Left cardiac atrium (tissue), 4 donors: ENCODE measurements at regions of chr15 and their contacts with region 1.

Region 1: DNA sequence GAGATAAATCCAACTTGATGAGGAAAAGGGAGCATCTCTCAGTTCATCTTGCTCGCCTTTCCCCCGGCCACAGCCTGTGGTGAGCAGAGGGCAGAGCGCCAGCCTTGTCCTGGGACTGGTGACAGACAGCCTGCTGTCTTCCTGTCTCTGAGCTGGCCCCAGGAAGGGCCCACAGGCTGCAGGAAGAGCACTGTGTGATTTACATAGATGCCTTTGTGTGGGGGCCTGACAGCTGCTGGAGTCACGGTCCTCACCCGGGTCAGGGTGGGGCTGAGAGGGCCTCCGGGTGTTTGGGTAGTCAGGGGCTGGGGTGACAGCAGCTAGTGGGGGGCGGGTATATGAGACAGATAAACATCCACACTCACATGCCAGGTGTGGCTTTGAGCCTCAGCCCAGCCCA is 29.3 kb downstream of the PLA2G4D start:
- DNase-seq: no peak
- ATAC-seq: peak; percentile 16 to 21

Region 2: DNA sequence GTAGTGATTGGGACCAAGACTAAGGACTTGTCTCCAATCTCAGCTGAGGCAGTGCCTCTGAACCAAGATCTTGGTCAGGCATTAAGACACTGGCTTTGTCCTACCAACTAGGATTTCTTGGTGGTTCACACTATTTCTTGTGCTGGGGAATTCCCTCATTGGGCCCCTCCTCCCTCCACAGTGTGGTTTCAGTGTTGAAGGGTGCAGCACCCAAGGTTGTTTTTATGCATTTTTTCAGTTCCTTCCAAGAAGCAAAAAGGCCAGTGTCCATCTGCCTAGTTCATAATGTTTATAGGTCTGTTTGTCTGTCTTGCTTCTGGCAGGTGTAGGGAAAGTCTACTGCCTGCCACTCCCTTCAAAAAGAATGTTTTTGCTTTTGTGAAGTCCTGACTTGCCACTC is 581.9 kb before region 1 on chr15:
- intact Hi-C with region 1: no loop called
- DNase-seq: no peak
- ATAC-seq: no peak

Region 3: DNA sequence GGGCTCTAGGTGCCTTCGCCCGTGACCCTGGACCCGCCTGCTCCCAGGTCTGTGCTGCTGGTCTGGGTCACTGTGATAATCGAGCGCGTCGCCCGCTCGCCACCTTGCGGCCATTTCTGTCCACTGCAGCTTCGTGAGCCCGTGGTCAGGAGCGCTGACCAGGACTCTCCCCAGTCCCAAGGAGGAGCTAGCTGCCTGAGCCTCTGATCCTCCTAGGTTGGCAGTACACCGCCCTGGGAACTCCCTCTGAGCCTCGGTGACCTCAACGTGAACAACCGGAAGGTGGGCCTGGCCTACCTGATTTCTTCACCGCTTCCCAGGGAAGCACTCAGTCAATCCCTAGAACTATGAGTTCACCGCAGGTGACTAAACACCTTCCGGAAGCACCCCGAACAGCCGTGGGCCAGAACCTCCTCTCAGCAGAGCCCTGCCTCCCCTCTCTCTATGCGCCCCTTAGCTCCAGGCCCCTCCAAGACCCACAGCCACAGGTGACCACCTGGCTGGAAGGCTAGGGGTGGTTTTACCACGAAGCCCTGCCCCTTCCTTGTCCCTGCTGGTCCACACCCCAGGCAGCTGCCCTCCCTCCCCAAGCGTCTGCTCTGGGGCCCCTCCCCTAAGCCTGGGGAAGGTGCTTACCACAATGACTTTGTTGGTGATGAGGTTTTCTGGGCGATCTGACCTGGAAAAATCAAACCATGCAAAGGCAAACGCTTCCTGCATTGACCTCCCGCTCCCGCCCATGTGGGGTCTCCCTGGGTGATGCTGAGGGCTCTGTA is 19.6 kb after region 1 on chr15:
- intact Hi-C with region 1: loop called in 1 of 2 experiments (anchors 1 kb)
- DNase-seq: peak; percentile 69
- ATAC-seq: peak; percentile 75 to 85

Region 4: DNA sequence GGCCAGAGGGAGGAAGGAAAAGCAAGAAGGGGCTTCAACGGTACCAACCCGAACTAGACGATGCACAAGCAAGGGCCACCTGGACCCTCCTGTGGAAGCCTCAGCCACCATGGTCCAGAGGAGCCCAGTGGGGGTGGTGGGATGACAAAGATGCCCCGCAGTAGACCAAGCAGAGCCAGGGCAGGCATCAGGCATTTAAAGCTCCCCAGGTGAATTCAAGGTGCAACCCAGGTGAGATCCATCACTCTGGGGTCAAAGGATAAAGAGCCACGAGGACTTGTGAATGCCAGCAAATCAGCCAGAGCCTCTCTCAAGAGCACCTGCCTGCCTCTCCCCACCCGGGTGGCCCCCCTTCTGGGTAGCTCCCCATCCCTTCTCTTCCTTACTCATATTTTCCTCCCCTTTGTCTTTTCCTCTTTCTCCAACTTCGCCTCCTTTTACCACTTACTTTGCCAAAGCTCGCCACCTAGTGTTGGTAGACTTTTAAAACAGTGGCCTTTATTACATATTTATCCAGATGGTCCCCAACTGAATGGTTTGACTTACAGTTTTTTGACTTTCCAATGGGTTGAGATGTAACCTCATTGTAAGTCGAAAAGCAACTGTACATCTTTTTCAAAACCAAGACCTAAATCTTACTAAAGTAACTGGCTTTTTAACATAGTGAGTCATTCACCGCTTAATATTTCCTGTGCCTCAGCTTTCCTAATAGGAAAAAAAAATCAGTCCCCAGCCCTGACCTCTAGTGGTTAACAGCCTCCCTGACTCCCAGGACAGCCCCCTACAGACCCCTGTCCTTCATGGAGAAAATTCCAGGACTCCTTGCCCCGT is 72.6 kb after region 1 on chr15:
- intact Hi-C with region 1: loop called (anchors 5 kb)
- DNase-seq: no peak
- ATAC-seq: peak in 1 of 2 donors; percentile 45